Prostate gland (tissue), 2 donors: ENCODE measurements at regions of chr18 and their contacts with region 1.

Region 1: DNA sequence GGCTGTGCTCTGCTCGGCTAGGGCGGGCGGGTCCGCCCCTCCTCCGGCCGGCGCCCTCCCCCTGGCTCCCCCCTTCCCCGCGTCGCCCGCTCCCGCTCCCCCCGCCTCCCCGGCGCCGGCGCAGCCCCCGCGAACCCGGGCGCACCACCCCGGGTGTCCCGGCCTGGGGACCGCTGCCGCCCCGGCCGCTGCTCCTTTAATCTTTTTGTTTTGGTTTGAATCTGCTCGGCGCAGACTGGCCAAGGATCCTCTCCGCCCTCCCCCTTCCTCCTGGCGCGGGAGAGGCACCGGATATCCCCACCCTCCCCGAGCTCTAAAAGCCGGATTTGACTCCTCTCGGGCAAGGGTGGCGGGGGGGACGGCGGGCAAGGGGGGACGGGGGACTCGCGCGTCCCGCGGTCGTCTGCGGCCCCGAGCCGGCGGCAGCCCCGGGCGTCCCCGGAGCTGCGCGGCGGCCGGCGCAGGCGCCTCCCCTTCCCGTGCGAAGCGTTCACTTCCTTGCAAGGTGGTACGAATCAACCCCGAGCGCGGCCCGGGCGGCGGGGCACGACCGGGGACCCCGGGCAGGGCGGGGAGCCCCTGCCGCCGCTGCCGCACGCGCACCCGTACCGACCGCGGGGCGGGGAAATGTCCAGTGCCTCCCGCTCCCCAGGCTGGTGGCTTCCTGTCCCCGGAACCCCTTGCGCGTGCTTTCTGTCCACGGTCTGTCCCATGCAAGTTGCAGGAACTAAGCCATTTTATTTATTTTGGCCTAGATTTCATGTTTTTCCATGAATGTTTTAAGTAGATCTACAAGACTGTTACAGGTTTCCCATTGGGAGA is at the start of gene PTGR3:
- DNase-seq: peak; percentile 80
- H3K4me3 ChIP-seq: peak within 1 kb of the TSS; percentile 92 to 97
- H3K27ac ChIP-seq: peak within 1 kb of the TSS; percentile 95 to 97
- H3K4me1 ChIP-seq: peaks cover 4% of the 10 kb centered on the region
- H3K27me3 ChIP-seq: no peaks in the 10 kb centered on the region
- CTCF ChIP-seq: no peak
- POLR2A ChIP-seq: peak; percentile 28
- total RNA-seq, gene PTGR3: 25.6 to 32.2 TPM

Region 2: DNA sequence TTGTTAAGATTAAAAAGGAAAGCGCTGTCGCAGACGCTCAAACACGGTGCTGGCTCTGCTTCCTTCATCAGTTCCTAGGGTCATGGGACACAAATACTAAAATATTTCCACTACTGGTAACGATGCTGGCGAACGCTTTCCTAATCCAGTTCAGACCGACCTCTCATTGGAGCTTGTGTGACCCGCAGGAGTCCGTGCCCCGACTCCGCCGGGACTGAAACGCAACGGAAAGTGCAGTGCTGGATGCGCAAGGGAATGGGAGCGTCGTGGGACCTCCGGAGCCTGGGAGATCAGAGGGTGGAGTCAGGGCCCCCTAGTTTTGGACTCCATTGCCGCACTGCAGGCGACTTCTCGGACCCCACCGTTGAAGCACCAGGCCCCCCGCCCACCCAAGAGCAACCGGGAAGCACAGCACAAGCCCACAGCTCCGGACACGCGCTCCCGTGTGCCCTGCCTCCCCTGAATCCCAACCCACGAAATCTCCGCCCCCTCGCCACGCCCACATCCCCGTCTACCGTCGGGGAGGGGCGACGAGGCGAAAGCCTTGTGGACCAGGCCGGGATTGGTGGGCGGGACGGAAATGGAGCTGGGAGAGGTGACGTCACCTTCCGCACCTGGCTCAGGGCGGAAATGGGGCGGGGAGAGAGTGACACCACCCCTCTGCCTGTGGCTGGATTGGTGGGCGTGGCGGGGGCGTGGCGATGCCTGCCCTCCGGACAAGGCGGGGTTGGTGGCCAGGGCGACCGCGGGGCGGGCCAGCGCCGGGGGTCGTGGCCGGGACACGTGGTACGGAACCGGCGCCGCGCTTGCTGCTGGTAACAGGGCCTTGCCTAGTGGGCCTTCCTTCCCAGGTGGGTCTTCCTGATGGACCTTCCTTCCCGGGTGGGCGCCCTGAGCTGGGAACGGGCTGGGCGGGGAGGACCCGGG is 713.5 kb before region 1 on chr18 and contains the start of gene CNDP2:
- intact Hi-C with region 1: loop called (anchors 10 kb)
- DNase-seq: peak; percentile 100
- H3K4me3 ChIP-seq: peak within 1 kb of the TSS; percentile 86 to 94
- H3K27ac ChIP-seq: peak within 1 kb of the TSS; percentile 93 to 96
- H3K4me1 ChIP-seq: no peaks in the 10 kb centered on the region
- H3K27me3 ChIP-seq: no peaks in the 10 kb centered on the region
- CTCF ChIP-seq: peak in 1 of 4 experiments; percentile 24
- POLR2A ChIP-seq: peak; percentile 94
- total RNA-seq, gene CNDP2: 144 to 294 TPM

Region 3: DNA sequence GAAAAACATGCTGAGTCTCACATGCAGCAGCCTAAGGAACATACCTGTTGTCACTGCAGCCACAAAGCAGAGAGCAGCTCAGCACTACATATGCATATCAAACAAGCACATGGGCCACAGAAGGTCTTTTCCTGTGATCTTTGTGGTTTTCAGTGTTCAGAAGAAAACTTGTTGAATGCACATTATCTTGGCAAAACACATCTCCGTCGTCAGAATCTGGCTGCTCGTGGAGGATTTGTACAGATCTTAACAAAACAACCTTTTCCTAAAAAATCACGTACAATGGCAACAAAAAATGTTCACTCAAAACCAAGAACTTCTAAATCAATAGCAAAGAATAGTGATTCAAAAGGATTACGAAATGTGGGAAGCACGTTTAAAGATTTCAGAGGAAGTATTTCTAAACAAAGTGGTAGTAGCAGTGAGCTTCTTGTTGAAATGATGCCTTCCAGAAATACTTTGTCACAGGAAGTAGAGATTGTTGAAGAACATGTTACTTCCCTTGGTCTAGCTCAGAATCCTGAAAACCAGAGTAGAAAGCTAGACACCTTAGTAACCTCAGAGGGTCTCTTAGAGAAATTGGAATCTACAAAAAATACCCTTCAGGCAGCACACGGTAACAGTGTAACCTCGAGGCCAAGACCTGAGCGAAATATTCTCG is 577.6 kb before region 1 on chr18:
- intact Hi-C with region 1: no loop called
- DNase-seq: no peak
- H3K4me3 ChIP-seq: no peak overlapping the region
- H3K27ac ChIP-seq: no peak overlapping the region
- H3K4me1 ChIP-seq: no peaks in the 10 kb centered on the region
- H3K27me3 ChIP-seq: no peaks in the 10 kb centered on the region
- CTCF ChIP-seq: no peak
- POLR2A ChIP-seq: no peak

Region 4: GRCh38 chr18:75247611-75248421 is 38.5 kb after region 1 on chr18:
- intact Hi-C with region 1: loop called (anchors 5 kb)
- DNase-seq: no peak
- H3K4me3 ChIP-seq: peak overlapping the region; percentile 19 to 28
- H3K27ac ChIP-seq: peak overlapping the region; percentile 51 to 58
- H3K4me1 ChIP-seq: no peaks in the 10 kb centered on the region
- H3K27me3 ChIP-seq: no peaks in the 10 kb centered on the region
- CTCF ChIP-seq: no peak
- POLR2A ChIP-seq: no peak

Region 5: GRCh38 chr18:75261430-75262223 is 52.3 kb after region 1 on chr18:
- intact Hi-C with region 1: loop called (anchors 5 kb)
- DNase-seq: no peak
- H3K4me3 ChIP-seq: no peak overlapping the region
- H3K27ac ChIP-seq: no peak overlapping the region
- H3K4me1 ChIP-seq: no peaks in the 10 kb centered on the region
- H3K27me3 ChIP-seq: no peaks in the 10 kb centered on the region
- CTCF ChIP-seq: no peak
- POLR2A ChIP-seq: no peak

Region 6: GRCh38 chr18:76349067-76349715 is 1139.9 kb after region 1 on chr18:
- intact Hi-C with region 1: loop called (anchors 5 kb)
- DNase-seq: peak; percentile 74
- H3K4me3 ChIP-seq: peak overlapping the region in 1 of 2 donors; percentile 8
- H3K27ac ChIP-seq: no peak overlapping the region
- H3K4me1 ChIP-seq: peaks cover 10% of the 10 kb centered on the region
- H3K27me3 ChIP-seq: no peaks in the 10 kb centered on the region
- CTCF ChIP-seq: peak; percentile 84 to 86 (median 86)
- POLR2A ChIP-seq: no peak

Region 7: DNA sequence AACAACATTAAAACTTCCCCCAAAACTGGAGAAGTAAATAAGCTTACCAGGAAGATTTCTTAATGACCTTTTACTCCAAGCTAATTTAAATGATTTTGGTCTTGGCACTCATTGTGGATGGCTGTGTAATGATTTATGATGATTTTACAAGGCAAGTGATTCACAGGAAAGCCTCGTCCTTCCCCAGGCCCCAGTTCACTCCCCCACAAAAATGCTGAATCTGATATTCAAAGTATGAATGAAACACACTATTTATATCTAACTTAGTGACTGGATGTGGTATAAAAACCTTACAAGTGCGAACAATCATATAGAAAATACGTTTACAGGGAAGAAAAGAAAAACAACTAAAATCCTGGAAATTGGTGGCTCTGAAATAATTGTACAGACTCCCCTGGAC is 1235.9 kb after region 1 on chr18:
- intact Hi-C with region 1: loop called (anchors 10 kb)
- DNase-seq: no peak
- H3K4me3 ChIP-seq: no peak overlapping the region
- H3K27ac ChIP-seq: peak overlapping the region in 1 of 2 donors; percentile 84
- H3K4me1 ChIP-seq: peaks cover 5% of the 10 kb centered on the region
- H3K27me3 ChIP-seq: no peaks in the 10 kb centered on the region
- CTCF ChIP-seq: no peak
- POLR2A ChIP-seq: no peak